ENCODE measurements at regions of chr20 and their contacts with region 1.

Region 1: DNA sequence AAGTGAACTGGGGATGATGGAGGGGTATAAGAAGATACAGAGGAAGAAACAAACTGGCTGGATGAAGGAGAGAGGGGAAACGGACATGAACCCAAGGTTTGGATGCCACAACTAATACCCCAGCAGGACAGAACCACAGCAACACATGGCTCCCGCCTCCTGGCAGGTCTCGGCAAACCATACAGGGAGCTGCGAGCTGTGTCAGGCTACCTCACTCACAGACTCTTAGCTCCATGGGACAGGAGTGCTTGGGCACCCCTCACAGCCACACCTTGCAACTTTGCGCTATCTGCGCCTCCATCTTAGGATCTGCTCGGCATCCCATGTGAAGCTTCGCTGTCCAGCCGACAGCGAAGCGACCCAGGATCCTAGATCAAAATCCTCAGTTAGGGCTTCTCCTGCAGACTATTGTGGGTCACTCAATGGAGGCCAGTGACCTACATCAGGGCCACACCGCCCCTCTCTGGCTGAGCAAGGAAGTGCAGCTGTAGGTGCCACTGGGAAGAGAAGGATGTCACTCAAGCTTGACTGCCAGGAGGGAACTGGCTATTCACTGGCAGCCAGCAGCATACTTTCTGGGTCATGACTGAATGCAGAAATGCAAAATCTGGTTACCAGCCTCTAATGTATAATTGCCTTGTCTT is 174.4 kb upstream of the RIN2 start:
- DNase-seq: peak; percentile 52 to 81 (median 74)
- H3K4me3 ChIP-seq: no peak overlapping the region
- H3K27ac ChIP-seq: no peak overlapping the region
- H3K4me1 ChIP-seq: no peaks in the 10 kb centered on the region
- H3K27me3 ChIP-seq: no peaks in the 10 kb centered on the region
- CTCF ChIP-seq: peak; percentile 52 to 75 (median 65)
- EP300 ChIP-seq: no peak
- POLR2A ChIP-seq: no peak

Region 2: DNA sequence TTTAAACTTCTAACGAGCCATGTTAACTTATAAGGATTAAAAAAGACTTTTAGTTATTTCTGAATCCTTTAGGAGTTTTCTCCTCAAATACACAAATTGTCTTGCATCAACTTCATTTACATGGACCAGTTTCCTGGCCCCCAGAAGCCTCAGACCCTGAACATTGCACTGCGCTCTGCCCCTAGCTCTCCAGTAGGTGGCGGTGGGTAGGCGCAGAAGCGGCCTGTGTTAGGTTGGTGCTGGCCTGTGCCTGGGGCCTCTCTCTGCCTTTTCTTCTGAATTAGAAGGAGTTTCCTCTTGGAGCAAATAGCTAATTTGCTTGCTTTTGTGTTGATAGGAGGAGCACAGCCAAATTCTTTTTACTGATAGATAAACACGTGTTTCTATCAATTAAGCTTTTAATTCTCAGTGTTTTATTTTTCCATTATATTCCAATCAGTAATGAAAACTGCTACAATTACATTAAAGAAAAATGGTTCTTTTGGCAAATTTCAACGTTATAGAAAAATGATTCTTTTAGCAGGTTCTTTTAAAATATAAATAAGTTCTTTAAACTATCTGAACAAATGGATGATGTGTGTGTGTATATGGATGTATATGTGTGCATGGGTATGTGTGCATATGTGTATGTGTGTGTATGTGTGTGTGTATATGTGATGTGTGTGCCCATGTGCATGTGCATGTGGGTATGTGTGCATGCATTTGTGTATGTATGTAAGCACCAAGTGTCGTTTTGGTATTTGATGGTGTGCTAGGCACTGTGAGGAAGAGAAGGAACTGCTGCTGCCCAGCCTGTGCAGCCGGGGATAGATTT is 951.3 kb before region 1 on chr20:
- intact Hi-C with region 1: loop called in 1 of 4 experiments (anchors 10 kb)
- DNase-seq: peak; percentile 59 to 80 (median 70)
- H3K4me3 ChIP-seq: no peak overlapping the region
- H3K27ac ChIP-seq: no peak overlapping the region
- H3K4me1 ChIP-seq: no peaks in the 10 kb centered on the region
- H3K27me3 ChIP-seq: no peaks in the 10 kb centered on the region
- CTCF ChIP-seq: peak; percentile 50 to 67 (median 61)
- EP300 ChIP-seq: no peak
- POLR2A ChIP-seq: no peak

Region 3: GRCh38 chr20:19205977-19206396 is 377.7 kb before region 1 on chr20:
- intact Hi-C with region 1: loop called in 3 of 4 experiments (anchors 2 to 5 kb)
- DNase-seq: peak; percentile 67 to 85 (median 83)
- H3K4me3 ChIP-seq: no peak overlapping the region
- H3K27ac ChIP-seq: no peak overlapping the region
- H3K4me1 ChIP-seq: peaks cover 2% of the 10 kb centered on the region
- H3K27me3 ChIP-seq: no peaks in the 10 kb centered on the region
- CTCF ChIP-seq: peak; percentile 77 to 86 (median 84)
- EP300 ChIP-seq: no peak
- POLR2A ChIP-seq: no peak

Region 4: GRCh38 chr20:19212821-19213502 is 370.7 kb before region 1 on chr20:
- intact Hi-C with region 1: loop called in 2 of 4 experiments (anchors 5 kb)
- DNase-seq: peak; percentile 82 to 86 (median 85)
- H3K4me3 ChIP-seq: peak overlapping the region; percentile 78
- H3K27ac ChIP-seq: peak overlapping the region; percentile 75 to 85
- H3K4me1 ChIP-seq: peaks cover 8% of the 10 kb centered on the region
- H3K27me3 ChIP-seq: no peaks in the 10 kb centered on the region
- CTCF ChIP-seq: peak; percentile 23 to 75 (median 74)
- EP300 ChIP-seq: no peak
- POLR2A ChIP-seq: no peak

Region 5: GRCh38 chr20:19885939-19886660 is 302.4 kb after region 1 on chr20:
- intact Hi-C with region 1: no loop called
- DNase-seq: peak; percentile 36 to 67 (median 55)
- H3K4me3 ChIP-seq: peak overlapping the region; percentile 13
- H3K27ac ChIP-seq: peak overlapping the region; percentile 9 to 57
- H3K4me1 ChIP-seq: peaks cover 26% of the 10 kb centered on the region
- H3K27me3 ChIP-seq: no peaks in the 10 kb centered on the region
- CTCF ChIP-seq: no peak
- EP300 ChIP-seq: no peak
- POLR2A ChIP-seq: no peak

Measured in ovary (tissue), 10 donors.